Stomach (tissue), 19 donors: ENCODE measurements at regions of chr2 and their contacts with region 1.

Region 1: GRCh38 chr2:113370478-113371091 is 66.9 kb upstream of the ZNG1B start:
- DNase-seq: peak; percentile 77 to 92
- H3K4me3 ChIP-seq: no peak overlapping the region
- H3K27ac ChIP-seq: no peak overlapping the region
- H3K4me1 ChIP-seq: peaks cover 0 to 7% (median 2%) of the 10 kb centered on the region in 4 donors
- H3K27me3 ChIP-seq: no peaks in the 10 kb centered on the region
- CTCF ChIP-seq: peak in 5 of 7 experiments; percentile 49 to 89 (median 67)
- EP300 ChIP-seq: no peak
- POLR2A ChIP-seq: no peak

Region 2: DNA sequence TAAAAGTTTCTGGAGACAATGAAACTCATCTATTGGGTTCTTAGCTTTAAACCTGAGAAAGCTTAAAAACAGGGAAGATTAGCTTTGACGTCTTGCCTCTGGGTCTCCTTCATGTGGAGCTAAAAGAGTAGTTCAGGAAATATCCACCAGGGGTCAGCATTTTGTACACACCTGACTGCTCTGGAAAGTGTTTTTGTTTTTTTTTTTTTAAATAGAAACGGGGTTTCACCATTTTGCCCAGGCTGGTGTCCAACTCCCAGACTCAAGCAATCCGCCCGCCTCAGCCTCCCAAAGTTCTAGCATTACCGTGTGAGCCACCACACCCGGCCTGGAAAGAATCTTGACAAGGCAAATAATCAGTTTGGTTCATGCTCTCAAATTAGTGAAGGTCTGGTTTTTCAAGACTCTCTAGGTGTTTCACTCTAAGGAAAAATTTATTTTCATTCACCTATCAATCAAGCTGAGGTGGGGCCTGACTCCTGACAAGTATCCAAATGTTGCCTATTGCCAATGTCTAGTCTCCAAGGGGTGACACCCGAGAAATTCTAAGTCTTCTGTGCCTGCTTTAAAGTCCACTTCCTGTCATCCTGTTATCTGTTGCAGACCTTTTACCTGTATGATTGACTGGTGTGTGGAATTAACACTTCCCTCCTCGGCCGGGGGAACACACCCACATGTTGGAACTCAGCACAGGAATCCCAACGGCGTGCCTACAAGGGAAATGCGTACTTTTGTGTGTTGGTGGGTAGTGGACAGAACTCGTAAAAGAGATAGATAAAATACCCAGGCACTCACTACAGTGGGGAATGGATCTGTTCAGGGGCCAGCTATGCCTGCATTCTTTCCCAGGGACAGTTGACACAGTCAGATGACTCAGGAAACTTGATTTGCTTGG is 231.9 kb before region 1 on chr2:
- intact Hi-C with region 1: loop called (anchors 10 kb)
- DNase-seq: peak; percentile 50 to 92
- H3K4me3 ChIP-seq: no peak overlapping the region
- H3K27ac ChIP-seq: peak overlapping the region in 3 of 5 donors; percentile 36 to 68 (median 40)
- H3K4me1 ChIP-seq: peaks cover 0 to 11% (median 7%) of the 10 kb centered on the region in 4 donors
- H3K27me3 ChIP-seq: no peaks in the 10 kb centered on the region
- CTCF ChIP-seq: peak in 6 of 7 experiments; percentile 27 to 90 (median 81)
- EP300 ChIP-seq: no peak
- POLR2A ChIP-seq: no peak

Region 3: DNA sequence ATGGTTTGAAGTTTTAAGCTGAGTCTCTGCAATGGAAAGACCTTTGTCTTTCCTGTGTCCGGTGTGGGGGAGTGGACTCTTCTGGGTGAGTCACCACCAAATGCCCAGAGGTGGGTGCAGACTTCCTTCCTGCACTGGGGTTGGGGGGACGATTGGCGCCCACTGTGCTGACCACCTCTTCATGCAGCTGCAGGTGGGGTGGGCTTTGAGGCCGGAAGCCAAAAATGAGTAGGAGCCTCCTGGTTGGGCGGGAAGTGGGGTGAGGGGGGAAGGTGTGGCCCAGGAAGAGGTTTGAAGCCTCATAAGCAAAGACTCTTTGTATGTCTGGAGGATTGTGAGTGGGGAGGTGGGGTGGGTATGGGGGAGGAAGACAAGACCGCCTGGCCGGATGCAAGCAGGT is 119.5 kb before region 1 on chr2:
- intact Hi-C with region 1: loop called (anchors 5 kb)
- DNase-seq: no peak
- H3K4me3 ChIP-seq: no peak overlapping the region
- H3K27ac ChIP-seq: no peak overlapping the region
- H3K4me1 ChIP-seq: peaks cover 0 to 12% (median 5%) of the 10 kb centered on the region in 4 donors
- H3K27me3 ChIP-seq: no peaks in the 10 kb centered on the region
- CTCF ChIP-seq: no peak
- EP300 ChIP-seq: no peak
- POLR2A ChIP-seq: no peak

Region 4: DNA sequence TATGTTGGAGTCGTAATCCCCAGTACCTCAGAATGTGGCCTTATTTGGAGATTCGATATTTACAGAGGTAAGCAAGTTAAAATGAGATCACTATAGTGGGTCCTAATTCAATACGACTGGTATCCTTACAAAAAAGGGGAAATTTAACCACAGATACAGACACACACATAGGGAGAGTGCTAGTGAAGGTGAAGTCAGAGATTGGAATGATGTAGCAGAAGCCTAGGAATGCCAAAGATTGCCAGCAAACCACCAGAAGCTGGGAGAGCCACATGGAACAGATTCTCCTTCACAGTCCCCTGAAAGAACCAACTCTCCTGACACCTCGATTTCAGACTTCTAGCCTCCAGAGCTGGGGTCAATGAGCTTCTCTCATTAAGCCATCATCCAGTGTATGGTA is 501.6 kb after region 1 on chr2:
- intact Hi-C with region 1: no loop called
- DNase-seq: no peak
- H3K4me3 ChIP-seq: no peak overlapping the region
- H3K27ac ChIP-seq: no peak overlapping the region
- H3K4me1 ChIP-seq: peaks cover 3 to 9% (median 6%) of the 10 kb centered on the region in 4 donors
- H3K27me3 ChIP-seq: no peaks in the 10 kb centered on the region
- CTCF ChIP-seq: no peak
- EP300 ChIP-seq: no peak
- POLR2A ChIP-seq: no peak